ENCODE measurements at regions of chr18 and their contacts with region 1.

Region 1: GRCh38 chr18:2723207-2723606 is 67.7 kb downstream of the SMCHD1 start:
- DNase-seq: no peak
- ATAC-seq: peak in 2 of 4 donors; percentile 16 to 20
- H3K4me3 ChIP-seq: no peak overlapping the region
- H3K27ac ChIP-seq: no peak overlapping the region
- H3K4me1 ChIP-seq: peaks cover 0 to 14% (median 0%) of the 10 kb centered on the region in 12 donors
- H3K27me3 ChIP-seq: no peaks in the 10 kb centered on the region
- CTCF ChIP-seq: no peak
- POLR2A ChIP-seq: no peak

Region 2: GRCh38 chr18:2662990-2663389 is 60.2 kb before region 1 on chr18:
- intact Hi-C with region 1: loop called in 1 of 10 experiments (anchors 10 kb)
- DNase-seq: no peak
- ATAC-seq: no peak
- H3K4me3 ChIP-seq: no peak overlapping the region
- H3K27ac ChIP-seq: no peak overlapping the region
- H3K4me1 ChIP-seq: peaks cover 0 to 64% (median 31%) of the 10 kb centered on the region in 12 donors
- H3K27me3 ChIP-seq: no peaks in the 10 kb centered on the region
- CTCF ChIP-seq: no peak
- POLR2A ChIP-seq: no peak

Region 3: DNA sequence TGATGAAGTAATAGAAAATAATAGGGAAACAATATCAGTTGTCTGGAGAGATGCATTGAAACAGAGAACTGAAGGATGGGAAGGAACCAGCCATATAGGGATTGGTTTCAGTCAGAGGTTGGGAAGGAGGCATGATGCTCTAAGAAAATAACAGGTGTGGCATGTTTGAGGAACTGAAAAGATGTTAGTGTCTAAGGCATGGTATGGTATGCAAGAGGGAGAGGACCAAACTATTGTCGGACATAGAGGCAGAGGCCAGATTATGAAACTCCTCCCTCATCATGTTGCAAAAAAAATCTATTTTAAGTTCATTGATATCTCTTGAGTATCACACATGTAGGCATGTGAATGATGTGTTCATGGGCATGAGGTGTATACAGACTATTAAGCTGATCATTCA is 74.7 kb after region 1 on chr18:
- intact Hi-C with region 1: loop called in 1 of 10 experiments (anchors 10 kb)
- DNase-seq: no peak
- ATAC-seq: no peak
- H3K4me3 ChIP-seq: no peak overlapping the region
- H3K27ac ChIP-seq: no peak overlapping the region
- H3K4me1 ChIP-seq: no peaks in the 10 kb centered on the region
- H3K27me3 ChIP-seq: no peaks in the 10 kb centered on the region
- CTCF ChIP-seq: no peak
- POLR2A ChIP-seq: no peak

Region 4: DNA sequence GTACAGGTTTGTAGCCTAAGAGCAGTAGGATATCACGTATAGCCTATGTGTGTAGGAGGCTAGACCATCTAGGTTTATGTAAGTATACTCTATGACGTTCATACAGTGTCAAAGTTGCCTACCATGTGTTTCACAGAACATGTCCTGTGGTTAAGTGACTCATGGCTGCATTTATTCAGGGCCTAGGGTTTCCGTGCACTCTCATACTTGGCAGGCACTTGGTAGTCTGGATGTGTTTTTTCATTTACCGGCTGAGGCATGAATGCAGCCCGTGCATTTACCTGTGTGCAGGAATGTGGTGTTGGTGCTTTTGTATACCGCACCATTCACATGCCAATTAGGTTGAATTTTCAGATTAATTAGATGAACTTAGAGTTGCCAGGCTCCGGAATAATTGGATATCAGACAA is 582.2 kb after region 1 on chr18:
- intact Hi-C with region 1: no loop called
- DNase-seq: no peak
- ATAC-seq: no peak
- H3K4me3 ChIP-seq: no peak overlapping the region
- H3K27ac ChIP-seq: no peak overlapping the region
- H3K4me1 ChIP-seq: no peaks in the 10 kb centered on the region
- H3K27me3 ChIP-seq: no peaks in the 10 kb centered on the region
- CTCF ChIP-seq: no peak
- POLR2A ChIP-seq: no peak

Measured in heart left ventricle (tissue), 16 donors.